CD14-positive monocyte (primary cell): ENCODE measurements at regions of chr6 and their contacts with region 1.

Region 1: DNA sequence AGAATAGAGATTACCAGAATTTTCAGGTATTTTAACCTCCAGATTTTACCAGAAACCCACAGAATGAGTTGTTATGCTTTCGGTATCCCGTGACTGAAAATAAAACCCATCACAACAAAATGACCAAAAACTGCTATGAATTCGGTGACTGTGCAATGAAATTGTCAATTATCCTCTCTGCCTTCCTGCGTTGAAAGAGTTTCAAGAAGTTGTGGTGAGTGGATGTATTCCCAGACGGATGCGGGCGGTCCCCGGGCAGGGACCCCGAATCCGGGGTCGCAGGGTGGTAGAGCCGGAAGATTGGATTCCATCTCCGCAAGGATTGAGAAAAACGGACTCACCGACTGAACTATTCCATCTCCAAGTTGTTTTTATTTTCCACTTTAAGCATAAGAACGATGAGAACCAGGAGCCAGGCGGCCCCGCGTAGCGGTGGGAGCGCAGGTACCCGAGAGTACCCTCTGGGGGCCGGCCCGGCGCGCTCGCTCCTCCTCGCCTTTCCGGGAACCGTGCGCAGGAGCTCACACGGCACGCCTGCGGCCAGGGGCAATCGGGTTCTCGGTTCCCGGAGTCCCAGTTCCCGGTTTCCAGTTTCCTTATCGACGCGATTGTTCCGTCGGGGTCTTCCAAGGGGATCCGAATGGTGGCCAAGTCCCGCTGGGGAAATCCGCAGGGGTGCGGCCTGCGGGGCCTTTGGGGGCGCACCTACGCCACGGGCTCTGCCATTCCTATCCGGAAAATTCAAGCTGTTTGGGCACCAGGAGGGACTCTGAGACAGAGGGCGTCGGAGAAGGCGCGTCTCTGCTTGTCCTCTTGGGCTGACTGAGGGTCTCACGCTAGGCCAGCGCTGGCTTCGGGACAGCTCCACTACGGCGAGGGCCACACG is 104.9 kb upstream of the PRDM1 start:
- DNase-seq: no peak
- H3K4me3 ChIP-seq: peak overlapping the region; percentile 5 to 62 (median 8)
- H3K4me3 Mint-ChIP-seq: peak overlapping the region; percentile 75 to 96
- H3K27ac ChIP-seq: no peak overlapping the region
- H3K27ac Mint-ChIP-seq: peak overlapping the region in 3 of 7 donors; percentile 46 to 68 (median 66)
- H3K4me1 ChIP-seq: peaks cover 21 to 22% of the 10 kb centered on the region in 2 donors
- H3K4me1 Mint-ChIP-seq: peaks cover 25% of the 10 kb centered on the region
- H3K27me3 ChIP-seq: peaks cover 32 to 53% of the 10 kb centered on the region in 2 donors
- H3K27me3 Mint-ChIP-seq: peaks cover 46 to 52% (median 50%) of the 10 kb centered on the region in 3 donors
- CTCF ChIP-seq: no peak

Region 2: GRCh38 chr6:105786890-105787655 is 194.2 kb before region 1 on chr6:
- intact Hi-C with region 1: loop called in 1 of 2 experiments (anchors 10 kb)
- DNase-seq: no peak
- H3K4me3 ChIP-seq: no peak overlapping the region
- H3K4me3 Mint-ChIP-seq: no peak overlapping the region
- H3K27ac ChIP-seq: no peak overlapping the region
- H3K27ac Mint-ChIP-seq: peak overlapping the region in 3 of 7 donors; percentile 59 to 79 (median 62)
- H3K4me1 ChIP-seq: peaks cover 54 to 59% of the 10 kb centered on the region in 2 donors
- H3K4me1 Mint-ChIP-seq: peaks cover 57% of the 10 kb centered on the region
- H3K27me3 ChIP-seq: no peaks in the 10 kb centered on the region
- H3K27me3 Mint-ChIP-seq: peaks cover 0 to 8% (median 2%) of the 10 kb centered on the region in 3 donors
- CTCF ChIP-seq: no peak